Ascending aorta (tissue), 2 donors: ENCODE measurements at regions of chr11 and their contacts with region 1.

Region 1: GRCh38 chr11:96162816-96163499 is 180.0 kb downstream of the MAML2 start:
- DNase-seq: peak in 1 of 2 donors; percentile 78
- H3K4me3 ChIP-seq: no peak overlapping the region
- H3K27ac ChIP-seq: peak overlapping the region; percentile 54 to 74
- H3K4me1 ChIP-seq: peaks cover 0 to 49% of the 10 kb centered on the region in 2 donors
- H3K27me3 ChIP-seq: no peaks in the 10 kb centered on the region
- CTCF ChIP-seq: no peak

Region 2: GRCh38 chr11:96180341-96180740 is 17.4 kb after region 1 on chr11:
- intact Hi-C with region 1: no loop called
- DNase-seq: no peak
- H3K4me3 ChIP-seq: no peak overlapping the region
- H3K27ac ChIP-seq: no peak overlapping the region
- H3K4me1 ChIP-seq: no peaks in the 10 kb centered on the region
- H3K27me3 ChIP-seq: no peaks in the 10 kb centered on the region
- CTCF ChIP-seq: no peak

Region 3: GRCh38 chr11:96215110-96215782 is 52.3 kb after region 1 on chr11:
- intact Hi-C with region 1: loop called (anchors 5 kb)
- DNase-seq: no peak
- H3K4me3 ChIP-seq: no peak overlapping the region
- H3K27ac ChIP-seq: peak overlapping the region; percentile 69 to 79
- H3K4me1 ChIP-seq: peaks cover 21 to 78% of the 10 kb centered on the region in 2 donors
- H3K27me3 ChIP-seq: no peaks in the 10 kb centered on the region
- CTCF ChIP-seq: no peak

Region 4: DNA sequence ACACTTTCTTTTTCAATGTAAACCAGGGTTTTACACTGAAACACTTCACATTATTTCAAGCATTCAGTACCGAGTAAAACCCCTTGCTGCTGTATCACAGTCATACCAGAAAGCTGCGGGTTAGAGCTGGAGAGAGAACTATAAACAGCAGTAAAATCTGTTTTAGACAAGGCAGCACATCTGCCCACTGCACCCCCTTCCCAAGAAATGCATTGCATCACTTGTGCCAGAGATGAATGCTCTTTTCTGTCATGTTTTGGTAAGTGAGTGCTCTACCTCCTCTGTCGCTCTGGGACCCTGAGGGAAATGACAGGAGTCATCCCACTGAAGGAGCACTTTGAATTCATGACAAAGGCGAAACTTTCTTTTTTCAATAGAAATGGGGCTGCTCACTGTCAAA is 72.8 kb after region 1 on chr11:
- intact Hi-C with region 1: loop called (anchors 5 kb)
- DNase-seq: no peak
- H3K4me3 ChIP-seq: peak overlapping the region; percentile 4 to 53
- H3K27ac ChIP-seq: peak overlapping the region; percentile 53 to 60
- H3K4me1 ChIP-seq: peaks cover 0 to 13% of the 10 kb centered on the region in 2 donors
- H3K27me3 ChIP-seq: no peaks in the 10 kb centered on the region
- CTCF ChIP-seq: no peak

Region 5: DNA sequence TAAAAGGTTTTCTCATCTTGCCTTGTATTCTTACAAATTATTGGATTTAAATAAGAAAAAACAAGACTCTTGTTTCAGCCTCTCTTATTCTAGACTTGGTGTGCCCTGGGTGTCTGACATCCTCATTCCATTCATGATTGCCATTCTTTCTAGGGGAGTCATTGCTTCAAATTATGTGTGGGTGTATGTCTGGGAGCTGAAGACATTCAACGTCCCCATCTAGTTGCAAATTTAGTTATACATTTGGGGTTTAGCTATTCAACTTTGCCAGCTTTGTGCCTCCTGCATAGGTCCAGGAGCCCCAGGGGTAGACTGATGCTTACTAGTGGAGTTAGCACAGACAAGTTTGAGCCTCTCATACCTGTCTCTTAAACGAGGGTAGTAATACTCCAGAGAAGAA is 162.0 kb after region 1 on chr11:
- intact Hi-C with region 1: no loop called
- DNase-seq: no peak
- H3K4me3 ChIP-seq: peak overlapping the region in 1 of 2 donors; percentile 12
- H3K27ac ChIP-seq: peak overlapping the region; percentile 75 to 81
- H3K4me1 ChIP-seq: peaks cover 0 to 32% of the 10 kb centered on the region in 2 donors
- H3K27me3 ChIP-seq: no peaks in the 10 kb centered on the region
- CTCF ChIP-seq: no peak